Endothelial cell of umbilical vein (primary cell): ENCODE measurements at regions of chr4 and their contacts with region 1.

Region 1: DNA sequence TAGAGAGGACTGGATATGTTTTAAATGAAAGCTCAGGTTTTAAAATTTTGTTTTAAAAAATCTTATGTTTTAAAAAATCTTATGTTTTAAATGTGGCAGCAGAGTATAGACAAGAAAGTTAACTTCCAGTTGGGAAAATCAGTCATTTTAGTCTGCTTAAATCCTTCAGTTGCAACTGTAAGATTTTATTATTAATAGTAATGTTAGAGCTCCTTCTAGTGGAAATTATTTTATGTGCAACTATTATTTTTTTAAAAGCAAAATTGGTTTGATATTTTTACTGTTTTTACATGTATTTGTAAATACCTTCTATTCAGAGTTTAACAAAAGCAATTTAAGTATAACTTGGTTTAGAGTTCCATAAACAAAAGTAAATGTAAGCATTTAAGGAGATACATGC is 8.5 kb upstream of the NUDT6 start:
- DNase-seq: peak; percentile 40
- H3K4me3 ChIP-seq: no peak overlapping the region
- H3K27ac ChIP-seq: no peak overlapping the region
- H3K4me1 ChIP-seq: no peaks in the 10 kb centered on the region
- H3K27me3 ChIP-seq: no peaks in the 10 kb centered on the region
- CTCF ChIP-seq: peak in 1 of 2 donors; percentile 25
- POLR2A ChIP-seq: no peak

Region 2: DNA sequence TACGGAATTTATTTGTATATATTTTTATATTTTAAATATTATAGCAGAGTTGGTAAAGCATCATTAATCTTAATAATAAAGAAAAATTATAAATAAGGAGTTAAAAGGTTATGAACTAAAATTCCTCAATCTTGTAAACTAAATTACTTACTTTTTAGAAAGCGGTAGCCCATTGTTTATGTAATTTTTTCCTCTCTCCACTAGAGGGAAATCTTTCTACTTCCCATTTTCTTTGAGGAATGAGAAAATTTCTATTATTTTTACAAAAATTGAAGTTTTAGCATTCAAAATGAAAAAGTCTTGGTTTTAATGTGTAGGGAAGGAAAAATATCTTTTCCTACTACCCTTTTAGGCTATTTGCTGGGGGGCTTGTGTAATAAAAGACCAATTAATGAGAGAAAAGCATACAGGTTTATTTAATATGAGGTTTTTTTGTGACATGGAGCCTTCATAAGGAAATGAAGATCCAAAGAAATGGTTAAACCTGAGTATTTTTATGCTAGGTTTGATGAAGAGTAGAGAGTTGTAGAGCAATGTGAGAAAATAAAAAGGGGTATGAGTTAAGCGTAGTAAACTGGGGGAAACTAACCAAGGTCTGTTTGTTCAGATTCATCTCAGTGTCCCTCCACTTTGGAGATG is 620.8 kb before region 1 on chr4:
- CTCF ChIA-PET with region 1: no interaction called
- POLR2A ChIA-PET with region 1: no interaction called
- dilution Hi-C with region 1: no loop called
- intact Hi-C with region 1: loop called (anchors 10 kb)
- DNase-seq: no peak
- H3K4me3 ChIP-seq: no peak overlapping the region
- H3K27ac ChIP-seq: no peak overlapping the region
- H3K4me1 ChIP-seq: no peaks in the 10 kb centered on the region
- H3K27me3 ChIP-seq: no peaks in the 10 kb centered on the region
- CTCF ChIP-seq: peak in 1 of 2 donors; percentile 10
- POLR2A ChIP-seq: no peak

Region 3: DNA sequence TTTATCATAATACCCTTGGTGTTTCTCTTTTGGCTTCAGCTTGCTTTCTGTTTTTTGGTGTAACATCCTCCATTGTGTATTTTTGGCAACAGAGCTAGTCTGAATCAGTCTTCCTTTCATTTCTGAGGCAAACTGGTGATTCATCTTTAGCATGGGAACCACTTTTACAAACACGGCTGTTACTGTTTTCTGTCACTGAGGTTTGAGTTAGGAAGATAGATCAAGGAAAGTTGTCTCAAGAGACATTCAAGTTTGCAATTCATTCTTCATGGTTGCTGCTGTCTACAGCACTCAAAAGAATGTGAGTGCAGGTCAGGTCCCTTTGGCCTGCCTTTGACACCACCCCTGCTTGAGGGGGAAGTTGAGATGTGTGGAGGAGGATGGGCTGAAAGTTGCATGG is 346.3 kb before region 1 on chr4:
- CTCF ChIA-PET with region 1: interaction called, 25 read pairs
- POLR2A ChIA-PET with region 1: no interaction called
- dilution Hi-C with region 1: no loop called
- intact Hi-C with region 1: no loop called
- DNase-seq: peak; percentile 73
- H3K4me3 ChIP-seq: no peak overlapping the region
- H3K27ac ChIP-seq: no peak overlapping the region
- H3K4me1 ChIP-seq: peaks cover 5% of the 10 kb centered on the region
- H3K27me3 ChIP-seq: peaks cover 0 to 4% of the 10 kb centered on the region in 2 experiments
- CTCF ChIP-seq: no peak
- POLR2A ChIP-seq: no peak

Region 4: GRCh38 chr4:122602277-122603142 is 328.4 kb before region 1 on chr4:
- CTCF ChIA-PET with region 1: interaction called, 39 read pairs
- POLR2A ChIA-PET with region 1: no interaction called
- dilution Hi-C with region 1: no loop called
- intact Hi-C with region 1: loop called (anchors 1 kb)
- DNase-seq: peak; percentile 58
- H3K4me3 ChIP-seq: no peak overlapping the region
- H3K27ac ChIP-seq: no peak overlapping the region
- H3K4me1 ChIP-seq: no peaks in the 10 kb centered on the region
- H3K27me3 ChIP-seq: peaks cover 10 to 14% of the 10 kb centered on the region in 2 experiments
- CTCF ChIP-seq: peak; percentile 15 to 16
- POLR2A ChIP-seq: no peak

Region 5: DNA sequence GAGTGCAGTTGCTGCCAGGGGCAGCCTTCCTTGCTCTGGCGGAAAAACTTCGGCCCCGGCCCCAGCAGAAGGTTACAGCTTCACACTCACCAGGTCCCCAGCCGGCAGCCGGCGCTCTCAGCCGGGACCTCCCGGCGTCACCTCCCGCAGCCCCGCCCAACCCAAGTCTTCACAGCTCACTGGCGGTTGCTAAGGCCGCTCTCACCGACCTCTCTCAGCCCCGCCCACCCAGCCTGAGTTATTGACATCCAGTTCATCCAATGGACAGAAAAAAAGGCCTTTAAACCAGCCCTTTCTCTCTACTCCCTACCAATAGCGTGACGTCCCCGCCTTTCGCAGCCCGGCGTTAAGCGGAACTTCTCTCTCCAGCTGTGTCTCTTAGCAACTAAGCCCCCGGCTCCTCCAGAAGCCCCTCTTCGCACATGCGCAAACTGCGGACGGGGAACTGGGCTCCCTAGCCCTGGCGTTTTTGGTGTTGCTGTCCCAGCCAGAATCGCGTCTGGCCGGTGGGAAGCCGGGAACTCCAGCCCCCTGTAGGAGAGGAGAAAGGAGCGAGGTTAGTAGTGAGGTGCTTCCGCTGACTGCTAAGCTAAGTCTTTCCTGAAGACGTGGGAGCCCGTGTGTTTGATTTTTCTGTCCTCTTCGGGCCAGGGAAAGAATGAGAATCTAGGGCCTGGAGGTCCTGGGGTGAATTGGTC is 198.4 kb before region 1 on chr4 and contains the start of gene BBS12:
- CTCF ChIA-PET with region 1: interaction called, 15 read pairs
- POLR2A ChIA-PET with region 1: interaction called, 3 read pairs
- dilution Hi-C with region 1: no loop called
- intact Hi-C with region 1: no loop called
- DNase-seq: peak; percentile 100
- H3K4me3 ChIP-seq: peak within 1 kb of the TSS; percentile 62 to 84 (median 82)
- H3K27ac ChIP-seq: peak within 1 kb of the TSS; percentile 83
- H3K4me1 ChIP-seq: peaks cover 7% of the 10 kb centered on the region
- H3K27me3 ChIP-seq: no peaks in the 10 kb centered on the region
- CTCF ChIP-seq: peak; percentile 34 to 62
- POLR2A ChIP-seq: no peak
- total RNA-seq, gene BBS12: 2.1 and 2.3 TPM in 2 replicates

Region 6: GRCh38 chr4:123838474-123838873 is 907.6 kb after region 1 on chr4:
- CTCF ChIA-PET with region 1: no interaction called
- POLR2A ChIA-PET with region 1: no interaction called
- dilution Hi-C with region 1: no loop called
- intact Hi-C with region 1: no loop called
- DNase-seq: no peak
- H3K4me3 ChIP-seq: no peak overlapping the region
- H3K27ac ChIP-seq: no peak overlapping the region
- H3K4me1 ChIP-seq: peaks cover 20% of the 10 kb centered on the region
- H3K27me3 ChIP-seq: no peaks in the 10 kb centered on the region
- CTCF ChIP-seq: no peak
- POLR2A ChIP-seq: no peak

Region 7: DNA sequence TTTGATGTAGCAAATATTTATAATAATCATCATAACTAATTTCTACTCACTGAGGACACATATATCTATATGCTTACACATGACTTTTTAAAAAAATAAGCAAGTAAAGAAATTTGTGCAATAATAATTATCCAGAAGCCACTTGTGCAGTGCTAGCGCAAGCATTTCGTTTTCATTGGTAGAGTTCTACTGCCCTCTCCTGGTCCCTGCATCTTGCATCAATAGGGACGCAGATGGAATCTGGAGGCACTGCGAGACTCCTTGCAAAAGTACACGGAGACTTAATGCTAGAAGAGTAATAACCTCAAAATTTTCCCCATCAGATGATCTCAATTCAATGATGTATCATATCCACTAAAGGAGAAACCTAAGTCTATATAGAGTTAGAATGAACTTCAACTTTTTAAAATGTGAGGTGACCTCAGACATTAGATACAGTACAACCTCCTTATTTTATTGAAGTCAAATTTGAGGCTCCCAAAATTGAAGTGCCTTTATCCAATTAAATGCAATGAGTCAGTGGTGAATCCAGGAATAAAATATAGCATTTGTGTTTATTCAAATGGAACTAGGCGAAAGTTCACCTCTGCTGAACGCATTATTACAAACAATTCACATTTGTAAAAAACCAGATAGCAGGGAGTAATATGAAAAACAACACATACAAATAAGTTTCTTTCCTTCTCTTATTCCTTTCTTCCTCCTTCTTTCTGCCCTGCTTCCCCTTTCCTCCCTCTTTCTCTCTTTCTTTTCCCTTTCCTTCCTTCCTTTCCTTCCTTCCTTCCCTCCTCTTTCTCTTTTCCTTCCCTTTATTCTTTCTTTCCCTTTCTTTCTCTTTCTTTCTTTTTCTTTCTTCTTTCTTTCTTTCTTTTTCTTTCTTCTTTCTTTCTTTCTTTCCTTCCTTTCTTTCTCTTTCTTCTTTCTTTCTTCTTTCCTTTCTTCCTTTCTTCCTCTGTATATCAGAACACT is 1331.6 kb after region 1 on chr4:
- CTCF ChIA-PET with region 1: no interaction called
- POLR2A ChIA-PET with region 1: no interaction called
- dilution Hi-C with region 1: no loop called
- intact Hi-C with region 1: loop called (anchors 5 kb)
- DNase-seq: peak; percentile 86
- H3K4me3 ChIP-seq: no peak overlapping the region
- H3K27ac ChIP-seq: no peak overlapping the region
- H3K4me1 ChIP-seq: no peaks in the 10 kb centered on the region
- H3K27me3 ChIP-seq: no peaks in the 10 kb centered on the region
- CTCF ChIP-seq: peak; percentile 70 to 87
- POLR2A ChIP-seq: no peak